A549 (cell line): ENCODE measurements at regions of chr5 and their contacts with region 1.

Region 1: DNA sequence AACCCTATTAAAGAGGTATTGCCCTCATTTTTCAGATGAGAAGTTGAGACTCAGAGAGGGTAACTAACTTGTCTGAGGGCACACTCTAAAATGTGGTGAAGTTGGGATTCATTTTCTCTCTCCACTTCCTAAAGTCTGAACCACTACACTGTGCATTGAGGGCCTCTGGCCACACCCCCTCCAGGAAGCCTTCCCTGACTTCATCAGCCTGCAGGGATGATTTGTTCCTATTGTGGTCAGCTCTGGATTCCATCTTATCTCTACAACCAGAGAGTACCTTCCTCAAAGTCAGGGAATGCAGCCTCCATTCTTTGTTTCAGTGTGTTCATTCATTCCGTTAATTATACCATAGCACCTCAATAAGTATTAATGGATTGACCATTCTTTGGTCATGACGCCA is 356.0 kb upstream of the PANK3 start:
- DNase-seq: no peak
- ATAC-seq: no peak
- H3K4me3 ChIP-seq: no peak overlapping the region
- H3K27ac ChIP-seq: no peak overlapping the region
- H3K4me1 ChIP-seq: peaks cover 5% of the 10 kb centered on the region; the same call in 1 of the 3 replicates
- CTCF ChIP-seq: no peak
- EP300 ChIP-seq: no peak
- POLR2A ChIP-seq: no peak
- RAD21 ChIP-seq: no peak

Region 2: GRCh38 chr5:168947212-168947868 is 12.2 kb after region 1 on chr5:
- CTCF ChIA-PET with region 1: interaction called, 20 read pairs
- POLR2A ChIA-PET with region 1: no interaction called
- DNase-seq: peak; percentile 44 to 60
- ATAC-seq: peak; percentile 91 to 97
- H3K4me3 ChIP-seq: no peak overlapping the region
- H3K27ac ChIP-seq: peak overlapping the region in 1 of 2 experiments; percentile 53; a peak in 2 of 6 replicates
- H3K4me1 ChIP-seq: 0 out of 3 replicates have a peak, but pooled peaks cover 2% of the 10 kb centered on the region
- CTCF ChIP-seq: peak; percentile 67
- EP300 ChIP-seq: no peak
- POLR2A ChIP-seq: no peak
- RAD21 ChIP-seq: peak; percentile 73 to 78